ENCODE measurements at regions of chr9 and their contacts with region 1.

Region 1: GRCh38 chr9:98848450-98849149 is 41.1 kb downstream of the GALNT12 start:
- DNase-seq: peak; percentile 79 to 93 (median 82)
- ATAC-seq: peak; percentile 94
- H3K4me3 ChIP-seq: no peak overlapping the region
- H3K27ac ChIP-seq: peak overlapping the region; percentile 28
- H3K4me1 ChIP-seq: peaks cover 8 to 45% of the 10 kb centered on the region in 2 experiments; a peak in 4 of 5 replicates
- H3K27me3 ChIP-seq: no peaks in the 10 kb centered on the region
- CTCF ChIP-seq: peak; percentile 93 to 98 (median 96)
- EP300 ChIP-seq: peak; percentile 19; the same call in 1 of the 2 replicates
- POLR2A ChIP-seq: no peak
- RAD21 ChIP-seq: peak; percentile 95 to 96

Region 2: DNA sequence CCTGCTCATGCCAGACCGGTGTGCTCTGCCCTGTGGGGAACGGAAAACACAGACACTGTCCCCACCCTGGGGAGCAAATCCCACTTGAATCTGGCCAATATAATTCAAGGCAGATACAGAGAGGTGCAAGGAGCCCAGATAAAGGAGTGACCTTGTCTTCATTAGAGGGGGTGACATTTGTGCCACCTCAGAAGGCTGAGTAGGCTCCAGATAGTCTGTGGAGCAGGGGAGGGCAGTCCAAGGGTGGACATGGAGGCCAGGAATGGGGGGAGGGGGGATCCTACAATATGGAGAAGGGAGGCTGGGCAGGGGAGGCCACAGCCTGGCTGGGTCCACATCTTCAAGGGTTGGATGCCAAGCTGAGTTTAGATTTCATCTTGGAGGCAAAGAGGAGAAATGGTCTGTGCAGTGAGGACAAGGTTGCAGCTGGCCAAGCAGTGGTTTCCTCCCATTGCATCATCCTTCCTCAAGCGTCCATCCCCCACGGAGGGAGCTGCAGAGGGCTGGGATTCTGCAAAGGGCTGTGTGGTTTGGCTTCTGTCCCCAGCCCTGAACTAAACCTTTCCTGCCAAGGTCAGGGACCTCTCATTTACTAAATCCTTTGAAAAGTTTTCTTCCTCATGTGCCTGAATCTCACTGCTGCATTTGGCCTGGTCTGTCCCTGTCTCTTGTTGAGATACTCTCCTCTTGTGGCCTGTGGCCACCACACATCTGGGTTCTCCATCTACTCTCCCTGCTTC is 19.0 kb after region 1 on chr9:
- CTCF ChIA-PET with region 1: no interaction called
- POLR2A ChIA-PET with region 1: interaction called, 4 read pairs
- in situ Hi-C with region 1: no loop called
- intact Hi-C with region 1: loop called (anchors 1 kb)
- DNase-seq: peak; percentile 43 to 86 (median 62)
- ATAC-seq: peak; percentile 97
- H3K4me3 ChIP-seq: no peak overlapping the region
- H3K27ac ChIP-seq: peak overlapping the region; percentile 82
- H3K4me1 ChIP-seq: peaks cover 0 to 34% of the 10 kb centered on the region in 2 experiments; a peak in 3 of 5 replicates
- H3K27me3 ChIP-seq: no peaks in the 10 kb centered on the region
- CTCF ChIP-seq: no peak
- EP300 ChIP-seq: peak; percentile 98
- POLR2A ChIP-seq: no peak
- RAD21 ChIP-seq: peak; percentile 42 to 66

Region 3: DNA sequence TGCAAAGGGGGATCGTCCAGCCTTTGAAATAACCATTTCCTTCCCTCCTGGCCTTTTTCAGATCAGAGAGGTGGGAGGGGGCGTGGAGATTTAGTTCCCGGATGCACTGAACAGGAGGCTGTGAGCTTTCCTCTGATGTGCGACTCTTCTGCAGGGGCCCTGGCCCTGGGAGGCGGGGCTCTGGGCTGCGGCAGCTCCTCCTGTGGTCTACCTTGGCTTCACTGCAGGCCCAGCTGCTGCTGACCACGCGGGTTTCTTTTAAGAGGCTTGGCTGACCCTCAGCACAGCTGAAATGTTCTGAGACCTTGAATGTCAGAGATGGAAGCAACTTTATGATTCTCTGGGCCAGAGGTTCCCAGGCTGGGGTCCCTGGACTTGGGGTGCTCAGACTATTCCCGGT is 68.1 kb after region 1 on chr9:
- CTCF ChIA-PET with region 1: no interaction called
- POLR2A ChIA-PET with region 1: no interaction called
- in situ Hi-C with region 1: no loop called
- intact Hi-C with region 1: loop called (anchors 5 kb)
- DNase-seq: peak; percentile 79 to 88 (median 82)
- ATAC-seq: peak; percentile 98
- H3K4me3 ChIP-seq: no peak overlapping the region
- H3K27ac ChIP-seq: peak overlapping the region; percentile 44
- H3K4me1 ChIP-seq: peaks cover 16 to 21% of the 10 kb centered on the region in 2 experiments
- H3K27me3 ChIP-seq: no peaks in the 10 kb centered on the region
- CTCF ChIP-seq: peak; percentile 15 to 25 (median 23); a peak in 1 of 6 replicates
- EP300 ChIP-seq: 0 out of 2 replicates have a peak, but pooled peaks have one; percentile 7
- POLR2A ChIP-seq: no peak
- RAD21 ChIP-seq: peak in 1 of 2 experiments; percentile 34; a peak in 2 of 4 replicates

Region 4: GRCh38 chr9:98998441-98999151 is 150.0 kb after region 1 on chr9:
- CTCF ChIA-PET with region 1: interaction called, 34 read pairs
- POLR2A ChIA-PET with region 1: interaction called, 8 read pairs
- in situ Hi-C with region 1: loop called (anchors 5 kb)
- intact Hi-C with region 1: loop called (anchors 1 kb)
- DNase-seq: peak; percentile 83 to 87 (median 86)
- ATAC-seq: peak; percentile 98
- H3K4me3 ChIP-seq: no peak overlapping the region
- H3K27ac ChIP-seq: no peak overlapping the region
- H3K4me1 ChIP-seq: peaks cover 24 to 27% of the 10 kb centered on the region in 2 experiments
- H3K27me3 ChIP-seq: 0 out of 5 replicates have a peak, but pooled peaks cover 0 to 4% of the 10 kb centered on the region in 2 experiments
- CTCF ChIP-seq: peak; percentile 85 to 96 (median 93)
- EP300 ChIP-seq: no peak
- POLR2A ChIP-seq: no peak
- RAD21 ChIP-seq: peak; percentile 92 to 97

Region 5: DNA sequence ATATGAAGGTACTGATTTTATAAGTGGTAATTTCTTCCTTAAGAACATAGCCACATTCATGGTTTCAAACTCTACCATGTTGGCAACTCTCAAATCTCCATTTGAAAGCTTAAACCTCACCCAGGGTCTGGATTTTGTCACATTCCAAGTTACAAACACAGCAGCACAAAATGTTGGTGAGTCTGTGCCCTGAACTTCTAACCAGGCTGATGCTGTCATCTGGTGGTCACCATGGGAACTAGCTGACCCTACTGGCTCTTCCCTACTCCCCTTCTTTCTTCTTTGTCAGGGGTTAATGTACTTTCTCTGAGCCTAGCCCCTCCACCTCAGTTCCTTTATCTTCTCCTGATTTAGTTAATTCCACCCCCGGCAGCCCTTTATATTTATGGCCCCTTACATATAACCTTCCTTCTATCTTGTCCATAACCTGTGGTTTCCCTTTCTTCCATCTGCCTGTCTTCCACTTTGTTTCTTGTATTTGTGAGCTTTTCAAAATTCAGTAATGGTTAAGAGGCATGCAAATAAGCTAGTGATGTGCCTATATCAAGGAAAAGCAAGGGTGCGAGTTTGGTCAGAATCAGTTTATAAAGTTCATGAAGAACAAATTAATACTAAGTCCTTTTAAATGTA is 292.2 kb after region 1 on chr9:
- CTCF ChIA-PET with region 1: interaction called, 7 read pairs
- POLR2A ChIA-PET with region 1: interaction called, 4 read pairs
- in situ Hi-C with region 1: loop called (anchors 5 kb)
- intact Hi-C with region 1: loop called (anchors 5 kb)
- DNase-seq: peak; percentile 60 to 70 (median 66)
- ATAC-seq: peak; percentile 96
- H3K4me3 ChIP-seq: no peak overlapping the region
- H3K27ac ChIP-seq: no peak overlapping the region
- H3K4me1 ChIP-seq: peaks cover 0 to 15% of the 10 kb centered on the region in 2 experiments; a peak in 3 of 5 replicates
- H3K27me3 ChIP-seq: no peaks in the 10 kb centered on the region
- CTCF ChIP-seq: peak; percentile 85 to 88 (median 86)
- EP300 ChIP-seq: no peak
- POLR2A ChIP-seq: no peak
- RAD21 ChIP-seq: peak; percentile 94 to 97